Esophagus muscularis mucosa (tissue), 4 donors: ENCODE measurements at regions of chr12 and their contacts with region 1.

Region 1: DNA sequence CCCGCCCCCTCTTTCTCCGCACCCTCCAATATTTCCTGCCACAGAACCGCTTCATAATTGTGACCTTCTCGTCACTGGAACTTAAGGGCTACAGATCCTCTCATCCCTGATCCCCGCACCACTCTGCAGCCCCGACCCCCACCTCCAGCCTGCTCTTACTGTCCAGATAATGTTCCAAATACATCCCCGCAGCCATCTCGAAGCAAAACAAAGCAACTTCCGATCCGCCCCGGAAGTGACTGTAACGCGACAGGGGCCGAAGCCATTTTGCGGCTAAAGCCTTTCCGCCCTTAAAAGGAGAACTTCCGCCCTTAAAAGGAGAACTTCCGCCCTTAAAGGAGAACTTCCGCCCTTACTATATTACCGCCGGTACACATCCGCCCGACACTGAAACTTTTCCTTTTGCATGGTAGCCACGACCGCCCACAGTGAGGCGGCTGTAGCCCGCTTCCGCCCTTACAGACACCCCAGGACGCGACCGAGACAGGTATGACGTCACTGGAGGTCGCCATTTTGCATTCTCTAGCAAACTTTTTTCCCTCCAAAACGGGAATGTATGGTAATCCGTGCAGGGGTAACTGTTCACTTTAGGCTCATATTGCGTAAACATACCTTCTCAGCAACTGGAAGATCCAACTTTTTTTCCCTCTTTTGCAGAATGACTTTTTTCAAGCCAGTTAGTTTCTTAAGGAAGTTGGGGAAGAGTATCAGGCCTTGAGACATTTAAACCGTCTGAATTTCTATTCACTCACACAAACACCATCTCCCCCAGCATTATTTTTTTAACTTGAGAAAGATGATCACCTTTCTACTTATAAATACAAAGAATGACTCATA is at the start of gene ING4:
- DNase-seq: peak; percentile 99
- H3K4me3 ChIP-seq: peak within 1 kb of the TSS; percentile 74 to 88 (median 82)
- H3K27ac ChIP-seq: peak within 1 kb of the TSS; percentile 77 to 84 (median 82)
- H3K4me1 ChIP-seq: peaks cover 13 to 40% (median 21%) of the 10 kb centered on the region in 4 donors
- H3K27me3 ChIP-seq: no peaks in the 10 kb centered on the region
- CTCF ChIP-seq: peak in 1 of 3 experiments; percentile 4
- EP300 ChIP-seq: no peak
- POLR2A ChIP-seq: no peak
- total RNA-seq, gene ING4: 45.1 to 58.3 (median 49.9) TPM

Region 2: GRCh38 chr12:6688999-6689882 is 26.1 kb after region 1 on chr12 and contains the start of gene ZNF384:
- intact Hi-C with region 1: loop called (anchors 2 kb)
- DNase-seq: peak; percentile 99
- H3K4me3 ChIP-seq: peak within 1 kb of the TSS; percentile 66 to 93 (median 84)
- H3K27ac ChIP-seq: peak within 1 kb of the TSS; percentile 94 to 99 (median 97)
- H3K4me1 ChIP-seq: peaks cover 42 to 53% (median 48%) of the 10 kb centered on the region in 4 donors
- H3K27me3 ChIP-seq: no peaks in the 10 kb centered on the region
- CTCF ChIP-seq: peak in 2 of 3 experiments; percentile 21 to 27
- EP300 ChIP-seq: no peak
- POLR2A ChIP-seq: no peak
- total RNA-seq, gene ZNF384: 32.8 to 55.4 (median 41.0) TPM

Region 3: DNA sequence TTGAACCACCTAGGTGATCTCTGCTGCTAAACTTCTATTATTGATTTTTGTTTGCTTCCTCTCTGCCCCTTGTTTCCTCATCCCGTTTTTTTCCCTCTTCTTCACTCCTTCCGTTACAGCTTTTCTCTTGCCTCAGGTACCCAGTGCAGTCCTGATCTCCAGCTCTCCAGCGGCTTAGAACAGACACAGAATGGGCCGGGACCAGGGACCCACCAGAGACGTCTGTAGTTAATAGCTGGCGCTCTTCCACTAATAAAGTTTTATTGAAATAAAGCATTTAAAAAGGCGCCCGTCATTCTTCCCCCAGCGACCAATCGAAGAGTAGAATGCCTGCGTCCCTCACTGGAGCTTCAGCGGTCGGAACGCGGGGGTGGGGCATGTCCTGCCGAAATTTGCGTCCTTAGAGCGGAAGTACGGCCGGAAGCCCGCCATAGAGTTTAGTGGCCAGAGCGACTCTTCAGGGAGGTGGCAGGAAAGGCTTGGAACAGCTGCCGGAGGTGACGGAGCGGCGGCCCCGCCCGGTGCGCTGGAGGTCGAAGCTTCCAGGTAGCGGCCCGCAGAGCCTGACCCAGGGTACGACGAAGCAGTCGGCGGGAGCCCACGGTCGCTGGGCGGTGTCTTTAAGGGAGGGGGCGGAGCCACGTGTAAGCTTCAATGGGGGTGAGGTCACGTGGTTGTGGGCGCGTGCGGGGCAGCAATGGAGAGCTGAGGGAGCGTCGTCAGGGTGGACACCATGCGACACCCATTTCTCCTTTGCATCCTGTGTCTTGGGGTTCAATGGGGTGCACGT is 60.7 kb after region 1 on chr12 and contains the start of gene COPS7A:
- intact Hi-C with region 1: loop called (anchors 5 kb)
- DNase-seq: peak; percentile 99
- H3K4me3 ChIP-seq: peak within 1 kb of the TSS; percentile 63 to 71 (median 65)
- H3K27ac ChIP-seq: peak within 1 kb of the TSS; percentile 79 to 91 (median 87)
- H3K4me1 ChIP-seq: peaks cover 7 to 22% (median 15%) of the 10 kb centered on the region in 4 donors
- H3K27me3 ChIP-seq: no peaks in the 10 kb centered on the region
- CTCF ChIP-seq: no peak
- EP300 ChIP-seq: no peak
- POLR2A ChIP-seq: peak; percentile 31
- total RNA-seq, gene COPS7A: 51.9 to 71.8 (median 63.0) TPM